IMR-90 (cell line): ENCODE measurements at regions of chr18 and their contacts with region 1.

Region 1: GRCh38 chr18:50287441-50288347 is at the start of gene CXXC1:
- DNase-seq: peak; percentile 100
- ATAC-seq: peak; percentile 96
- H3K4me3 ChIP-seq: peak within 1 kb of the TSS; percentile 60
- H3K27ac ChIP-seq: peak within 1 kb of the TSS; percentile 33
- H3K4me1 ChIP-seq: peaks cover 3% of the 10 kb centered on the region; the same call in 1 of the 2 replicates
- H3K27me3 ChIP-seq: peaks cover 5% of the 10 kb centered on the region; the same call in 1 of the 2 replicates
- CTCF ChIP-seq: peak; percentile 56
- POLR2A ChIP-seq: no peak
- RAD21 ChIP-seq: no peak
- total RNA-seq, gene CXXC1: 24.0 and 29.4 TPM in 2 replicates

Region 2: DNA sequence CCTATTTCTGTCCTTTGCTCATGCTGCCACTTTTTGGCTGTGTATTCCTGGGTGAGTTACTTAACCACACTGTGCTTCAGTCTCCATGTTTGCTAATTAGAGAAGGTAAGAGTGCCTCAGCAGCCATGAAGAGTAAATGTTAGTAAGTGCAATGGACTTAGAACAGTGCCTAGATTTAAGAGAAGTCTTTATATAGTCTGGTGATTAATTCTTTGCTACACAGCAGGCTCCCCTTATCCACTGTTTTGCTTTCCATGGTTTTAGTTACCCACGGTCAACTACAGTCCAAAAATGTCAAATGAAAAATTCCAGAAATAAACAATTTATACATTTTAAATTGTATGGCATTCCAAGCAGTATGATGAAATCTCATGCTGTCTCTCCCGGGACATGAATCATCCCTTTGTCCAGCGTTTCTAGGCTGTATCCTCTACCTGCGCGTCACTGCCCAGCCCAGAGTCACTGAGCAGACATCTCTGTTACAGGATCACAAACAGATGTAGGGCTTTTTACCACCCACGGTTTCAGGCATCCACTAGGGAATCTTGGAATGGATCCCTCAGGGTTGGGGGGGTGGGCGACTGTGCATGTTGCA is 1657.9 kb before region 1 on chr18:
- CTCF ChIA-PET with region 1: no interaction called
- POLR2A ChIA-PET with region 1: no interaction called
- dilution Hi-C with region 1: no loop called
- in situ Hi-C with region 1: loop called (anchors 25 kb)
- intact Hi-C with region 1: no loop called
- DNase-seq: peak; percentile 100
- ATAC-seq: peak; percentile 95
- H3K4me3 ChIP-seq: no peak overlapping the region
- H3K27ac ChIP-seq: peak overlapping the region; percentile 57
- H3K4me1 ChIP-seq: peaks cover 23% of the 10 kb centered on the region
- H3K27me3 ChIP-seq: no peaks in the 10 kb centered on the region
- CTCF ChIP-seq: no peak
- POLR2A ChIP-seq: no peak
- RAD21 ChIP-seq: peak; percentile 23; the same call in 1 of the 2 replicates

Region 3: GRCh38 chr18:50273203-50274043 is 14.3 kb before region 1 on chr18:
- CTCF ChIA-PET with region 1: no interaction called
- POLR2A ChIA-PET with region 1: no interaction called
- dilution Hi-C with region 1: no loop called
- in situ Hi-C with region 1: no loop called
- intact Hi-C with region 1: no loop called
- DNase-seq: no peak
- ATAC-seq: no peak
- H3K4me3 ChIP-seq: no peak overlapping the region
- H3K27ac ChIP-seq: no peak overlapping the region
- H3K4me1 ChIP-seq: no peaks in the 10 kb centered on the region
- H3K27me3 ChIP-seq: no peaks in the 10 kb centered on the region
- CTCF ChIP-seq: no peak
- POLR2A ChIP-seq: no peak
- RAD21 ChIP-seq: no peak